Activated B cell treated with CpG ODN at 0.5 μM for 24 hours (primary cell): ENCODE measurements at regions of chr6 and their contacts with region 1.

Region 1: DNA sequence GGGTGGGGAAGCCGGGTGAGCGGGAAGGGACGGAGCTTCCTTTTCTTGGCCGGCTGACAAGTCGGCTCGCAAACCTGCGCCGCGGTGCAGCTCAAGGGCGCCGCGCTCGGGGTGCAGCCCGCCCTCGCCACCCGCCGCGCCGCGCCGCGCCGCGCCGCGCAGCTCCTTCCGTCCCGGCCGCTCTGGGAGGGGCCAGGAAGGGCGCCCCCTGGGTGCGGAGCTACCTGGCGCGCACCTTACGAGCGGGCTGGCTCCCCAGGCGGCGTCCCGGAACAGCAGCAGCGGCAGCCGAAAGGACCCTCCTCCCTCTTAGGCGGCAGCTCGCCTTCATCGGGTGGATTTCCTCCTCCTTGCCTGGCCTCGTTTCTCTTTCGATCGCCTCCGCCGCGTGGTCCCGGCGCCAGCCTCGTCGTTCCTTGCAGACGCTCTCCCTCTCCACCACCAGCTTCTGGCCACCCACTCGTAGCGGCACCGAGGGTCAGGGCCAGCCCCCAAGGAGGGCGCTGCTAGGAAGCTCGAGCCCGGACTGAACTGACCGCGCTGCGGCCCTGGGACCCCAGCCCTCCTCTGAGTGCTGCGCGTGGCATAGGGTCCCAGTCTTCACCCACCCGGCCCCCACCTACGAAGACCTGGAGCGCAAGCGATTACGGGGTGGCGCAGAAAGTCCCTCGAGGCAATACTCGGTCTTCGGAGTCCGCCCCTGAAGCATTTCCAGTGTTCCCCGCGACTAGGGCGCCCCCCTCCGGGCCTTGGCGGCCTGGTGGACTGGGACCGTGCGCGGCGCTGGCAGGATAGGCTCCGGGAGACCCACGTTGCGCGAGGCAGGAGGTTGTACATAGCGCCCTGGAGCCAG is at the start of gene MAP3K5:
- DNase-seq: peak; percentile 91
- ATAC-seq: peak; percentile 74
- H3K4me3 Mint-ChIP-seq: peak within 1 kb of the TSS; percentile 97
- H3K27ac Mint-ChIP-seq: peak within 1 kb of the TSS; percentile 96
- H3K4me1 Mint-ChIP-seq: peaks cover 42% of the 10 kb centered on the region
- H3K27me3 Mint-ChIP-seq: no peaks in the 10 kb centered on the region
- CTCF ChIP-seq: no peak
- total RNA-seq, gene MAP3K5: 21.6 and 24.4 TPM in 2 replicates

Region 2: DNA sequence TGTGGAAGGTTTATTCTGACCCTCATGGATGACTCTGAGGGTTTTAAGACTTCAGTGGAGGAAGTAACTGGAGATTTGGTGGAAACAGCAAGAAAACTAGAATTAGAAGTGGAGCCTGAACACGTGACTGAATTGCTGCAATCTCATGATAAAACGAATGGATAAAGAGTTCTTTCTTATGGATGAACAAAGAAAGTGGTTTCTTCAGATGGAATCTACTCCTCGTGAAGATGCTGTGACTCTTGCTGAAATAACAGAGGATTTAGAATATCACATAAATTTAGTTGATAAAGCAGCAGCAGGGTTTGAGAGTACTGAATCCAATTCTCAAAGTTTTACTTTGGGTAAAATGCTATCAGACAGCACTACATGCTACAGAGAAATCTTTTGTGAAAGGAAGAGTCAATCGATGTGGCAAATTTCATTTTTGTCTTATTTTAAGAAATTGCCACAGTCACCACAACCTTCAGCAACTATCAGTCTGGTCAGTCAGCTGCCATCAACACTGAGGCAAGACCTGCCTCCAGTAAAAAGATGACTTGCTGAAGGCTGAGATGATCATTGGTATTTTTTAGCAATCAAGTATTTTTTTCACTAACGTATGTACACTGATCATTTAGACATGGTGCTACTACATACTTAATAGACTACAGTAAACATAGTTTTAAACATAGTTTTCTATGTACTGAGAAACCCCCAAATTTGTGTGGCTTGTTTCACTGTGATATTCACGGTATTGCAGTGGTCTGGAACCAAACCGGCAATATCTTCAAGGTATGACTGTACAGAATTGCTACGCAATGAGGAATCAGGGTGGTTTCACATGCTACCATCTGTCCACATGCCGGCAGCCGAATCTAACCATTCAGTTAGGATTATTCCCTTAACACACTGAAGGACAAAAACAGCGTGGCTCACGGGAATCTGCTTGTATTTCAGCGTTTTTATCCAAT is 1462.5 kb before region 1 on chr6:
- CTCF ChIA-PET with region 1: no interaction called
- POLR2A ChIA-PET with region 1: no interaction called
- intact Hi-C with region 1: no loop called
- DNase-seq: no peak
- ATAC-seq: no peak
- H3K4me3 Mint-ChIP-seq: no peak overlapping the region
- H3K27ac Mint-ChIP-seq: no peak overlapping the region
- H3K4me1 Mint-ChIP-seq: no peaks in the 10 kb centered on the region
- H3K27me3 Mint-ChIP-seq: no peaks in the 10 kb centered on the region
- CTCF ChIP-seq: no peak

Region 3: DNA sequence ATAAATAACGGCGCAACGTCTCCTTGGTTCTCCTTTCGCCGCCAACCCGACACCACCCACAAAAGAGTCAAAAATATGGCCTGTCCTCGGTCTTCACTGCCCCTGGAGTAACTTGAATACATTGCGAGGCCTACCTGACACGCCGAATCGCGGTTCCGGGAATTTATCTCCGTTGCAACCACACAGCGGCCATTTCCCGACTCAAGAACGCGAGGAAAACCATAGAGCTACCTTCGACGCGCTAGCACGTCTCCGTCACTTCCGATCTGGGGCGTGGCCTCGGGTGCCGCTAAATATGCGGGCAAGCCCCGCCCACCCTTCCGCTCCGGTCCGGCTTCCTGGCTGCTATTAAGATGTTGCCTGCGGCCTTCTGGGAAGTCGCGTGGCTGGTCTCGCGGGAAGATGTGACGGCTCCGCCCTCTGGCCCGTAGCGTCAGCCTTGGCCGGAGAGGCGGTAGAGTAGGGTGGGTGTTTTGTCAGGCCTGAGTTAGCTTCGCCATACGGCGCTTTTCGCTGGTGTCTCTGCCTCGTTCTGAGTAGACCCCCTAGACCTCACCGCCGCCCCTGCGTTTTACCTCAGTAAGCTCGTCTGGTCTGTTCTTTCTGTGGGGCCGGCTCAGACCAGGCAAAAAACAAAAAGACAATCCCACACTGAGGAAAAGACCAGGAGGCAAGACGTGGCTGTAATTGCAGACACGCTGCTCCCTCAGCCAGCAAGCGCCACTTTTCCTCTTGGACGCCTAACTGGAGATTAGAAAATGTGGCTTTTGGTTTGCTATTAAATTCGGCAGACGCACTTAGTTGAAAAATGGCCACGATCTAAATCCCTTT is 502.8 kb before region 1 on chr6 and contains the start of gene BCLAF1:
- CTCF ChIA-PET with region 1: interaction called, 6 read pairs
- POLR2A ChIA-PET with region 1: interaction called, 26 read pairs
- intact Hi-C with region 1: loop called (anchors 1 kb)
- DNase-seq: peak; percentile 98
- ATAC-seq: peak; percentile 80
- H3K4me3 Mint-ChIP-seq: peak within 1 kb of the TSS; percentile 100
- H3K27ac Mint-ChIP-seq: peak within 1 kb of the TSS; percentile 100
- H3K4me1 Mint-ChIP-seq: peaks cover 49% of the 10 kb centered on the region
- H3K27me3 Mint-ChIP-seq: no peaks in the 10 kb centered on the region
- CTCF ChIP-seq: no peak
- total RNA-seq, gene BCLAF1: 253 and 259 TPM in 2 replicates

Region 4: DNA sequence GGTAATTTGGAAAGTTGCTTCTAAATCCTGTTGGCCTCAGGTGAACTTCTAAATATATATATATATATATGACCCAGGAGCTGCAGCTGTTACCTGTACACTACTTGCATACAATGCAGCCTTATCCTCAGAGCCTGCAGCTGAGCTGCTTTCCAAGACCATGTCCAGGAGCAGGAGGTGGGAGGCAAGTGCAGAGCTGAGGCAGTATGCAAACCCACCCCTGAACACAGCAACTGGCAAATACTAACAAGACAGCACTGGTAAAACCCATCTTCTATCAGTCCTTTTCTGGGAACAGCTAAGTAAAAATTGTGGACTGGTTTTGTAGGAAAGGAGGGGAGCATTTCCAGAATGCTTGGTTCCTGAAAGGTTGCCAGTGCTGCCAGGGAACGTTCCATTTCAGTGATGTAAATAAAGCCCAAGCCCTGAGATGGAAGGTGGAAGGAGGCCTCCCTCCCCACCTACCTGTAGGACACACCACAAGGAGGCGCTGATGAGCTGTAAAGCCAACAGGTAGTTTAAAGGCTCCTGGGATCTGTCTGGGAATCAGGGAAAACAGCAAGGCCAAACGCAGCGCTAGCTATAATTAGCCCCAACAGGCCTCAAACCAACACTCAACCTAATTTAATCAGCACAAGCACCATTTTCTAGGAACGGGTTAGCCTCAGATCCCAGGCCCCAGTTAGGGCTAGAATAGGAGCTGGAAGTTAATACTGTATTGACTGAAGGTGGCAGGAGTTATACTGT is 148.6 kb before region 1 on chr6:
- CTCF ChIA-PET with region 1: interaction called, 381 read pairs
- POLR2A ChIA-PET with region 1: interaction called, 119 read pairs
- intact Hi-C with region 1: loop called (anchors 1 kb)
- DNase-seq: peak; percentile 63
- ATAC-seq: peak; percentile 59
- H3K4me3 Mint-ChIP-seq: no peak overlapping the region
- H3K27ac Mint-ChIP-seq: no peak overlapping the region
- H3K4me1 Mint-ChIP-seq: peaks cover 4% of the 10 kb centered on the region
- H3K27me3 Mint-ChIP-seq: no peaks in the 10 kb centered on the region
- CTCF ChIP-seq: peak; percentile 69

Region 5: DNA sequence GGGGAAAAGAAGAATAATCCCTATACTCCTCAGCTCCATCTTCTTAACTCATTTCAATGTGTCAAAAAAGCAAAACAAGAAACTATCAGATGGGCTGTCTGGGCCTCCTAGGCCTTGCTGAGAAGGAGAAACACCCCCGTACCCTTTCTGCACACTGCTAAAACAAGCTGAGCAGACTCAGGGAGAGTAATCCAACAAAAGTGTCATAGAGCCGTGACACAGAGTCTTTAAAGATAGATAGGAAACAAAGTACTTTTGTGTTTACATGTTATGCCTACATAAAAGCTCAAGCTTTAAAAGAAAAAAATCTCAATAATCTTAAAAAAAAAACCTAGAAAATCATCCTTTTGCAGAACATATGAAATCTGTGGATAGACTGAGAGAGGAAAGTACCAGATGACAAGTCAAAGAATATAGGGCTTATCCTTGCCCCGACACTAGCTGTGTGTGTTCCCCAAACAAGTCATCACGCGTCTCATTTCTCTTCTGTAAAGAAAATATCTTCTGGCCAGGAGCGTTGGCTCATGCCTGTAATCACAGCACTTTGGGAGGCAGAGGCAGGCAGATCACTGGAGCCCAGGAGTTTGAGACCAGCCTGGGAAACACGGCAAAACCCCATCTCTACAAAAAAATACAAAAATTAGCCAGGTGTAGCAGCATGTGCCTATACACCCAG is 81.6 kb before region 1 on chr6:
- CTCF ChIA-PET with region 1: interaction called, 55 read pairs
- POLR2A ChIA-PET with region 1: interaction called, 53 read pairs
- intact Hi-C with region 1: no loop called
- DNase-seq: no peak
- ATAC-seq: no peak
- H3K4me3 Mint-ChIP-seq: no peak overlapping the region
- H3K27ac Mint-ChIP-seq: no peak overlapping the region
- H3K4me1 Mint-ChIP-seq: peaks cover 21% of the 10 kb centered on the region
- H3K27me3 Mint-ChIP-seq: no peaks in the 10 kb centered on the region
- CTCF ChIP-seq: no peak

Region 6: GRCh38 chr6:136737871-136738691 is 54.6 kb before region 1 on chr6:
- CTCF ChIA-PET with region 1: interaction called, 57 read pairs
- POLR2A ChIA-PET with region 1: interaction called, 27 read pairs
- intact Hi-C with region 1: loop called (anchors 1 kb)
- DNase-seq: no peak
- ATAC-seq: no peak
- H3K4me3 Mint-ChIP-seq: no peak overlapping the region
- H3K27ac Mint-ChIP-seq: no peak overlapping the region
- H3K4me1 Mint-ChIP-seq: peaks cover 31% of the 10 kb centered on the region
- H3K27me3 Mint-ChIP-seq: no peaks in the 10 kb centered on the region
- CTCF ChIP-seq: no peak

Region 7: DNA sequence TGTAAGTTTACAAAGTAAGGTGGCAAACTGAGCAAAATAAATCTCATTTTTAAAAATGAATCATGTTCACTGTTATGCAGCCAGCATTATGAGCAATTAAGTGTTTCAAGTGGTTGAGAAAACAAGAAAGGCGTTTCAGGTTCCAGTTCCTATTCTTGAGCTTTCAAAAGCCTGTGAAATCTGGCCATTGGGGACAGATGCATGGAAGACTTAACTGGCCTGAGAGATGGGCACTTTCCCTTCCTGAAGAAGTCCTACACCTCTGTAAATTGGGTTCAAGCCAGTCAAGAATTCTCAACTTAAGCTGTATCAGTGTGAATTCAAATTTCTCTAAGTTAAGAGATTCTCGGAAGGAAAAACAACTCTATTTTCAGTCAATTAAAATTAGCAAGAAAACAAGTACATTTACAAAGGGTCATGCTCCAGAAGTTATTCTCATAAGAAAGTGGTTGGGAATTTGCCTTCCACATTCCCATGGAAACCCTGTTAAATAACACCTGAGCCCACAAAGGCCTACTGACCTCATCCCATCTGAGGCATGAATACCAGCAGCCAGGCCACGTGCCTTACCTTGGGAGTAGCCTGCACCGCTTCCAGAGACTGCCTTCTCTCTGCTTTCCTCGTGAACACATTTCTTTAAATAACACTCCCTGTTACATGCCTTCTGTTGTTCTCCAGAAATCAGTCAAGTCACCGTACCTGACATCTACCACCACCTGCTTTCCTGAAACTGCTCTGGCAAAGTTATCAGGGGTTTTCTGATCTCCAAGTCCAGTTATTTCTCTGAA is 19.8 kb before region 1 on chr6:
- CTCF ChIA-PET with region 1: interaction called, 26 read pairs
- POLR2A ChIA-PET with region 1: interaction called, 6 read pairs
- intact Hi-C with region 1: no loop called
- DNase-seq: no peak
- ATAC-seq: peak; percentile 65
- H3K4me3 Mint-ChIP-seq: peak overlapping the region; percentile 45
- H3K27ac Mint-ChIP-seq: peak overlapping the region; percentile 76
- H3K4me1 Mint-ChIP-seq: peaks cover 73% of the 10 kb centered on the region
- H3K27me3 Mint-ChIP-seq: no peaks in the 10 kb centered on the region
- CTCF ChIP-seq: no peak